Endothelial cell of umbilical vein (primary cell): ENCODE measurements at regions of chr5 and their contacts with region 1.

Region 1: GRCh38 chr5:172370648-172371545 is 83.4 kb downstream of the SH3PXD2B start:
- DNase-seq: peak; percentile 35
- H3K4me3 ChIP-seq: no peak overlapping the region
- H3K27ac ChIP-seq: no peak overlapping the region
- H3K4me1 ChIP-seq: no peaks in the 10 kb centered on the region
- H3K27me3 ChIP-seq: no peaks in the 10 kb centered on the region
- CTCF ChIP-seq: peak; percentile 30 to 46
- POLR2A ChIP-seq: no peak

Region 2: DNA sequence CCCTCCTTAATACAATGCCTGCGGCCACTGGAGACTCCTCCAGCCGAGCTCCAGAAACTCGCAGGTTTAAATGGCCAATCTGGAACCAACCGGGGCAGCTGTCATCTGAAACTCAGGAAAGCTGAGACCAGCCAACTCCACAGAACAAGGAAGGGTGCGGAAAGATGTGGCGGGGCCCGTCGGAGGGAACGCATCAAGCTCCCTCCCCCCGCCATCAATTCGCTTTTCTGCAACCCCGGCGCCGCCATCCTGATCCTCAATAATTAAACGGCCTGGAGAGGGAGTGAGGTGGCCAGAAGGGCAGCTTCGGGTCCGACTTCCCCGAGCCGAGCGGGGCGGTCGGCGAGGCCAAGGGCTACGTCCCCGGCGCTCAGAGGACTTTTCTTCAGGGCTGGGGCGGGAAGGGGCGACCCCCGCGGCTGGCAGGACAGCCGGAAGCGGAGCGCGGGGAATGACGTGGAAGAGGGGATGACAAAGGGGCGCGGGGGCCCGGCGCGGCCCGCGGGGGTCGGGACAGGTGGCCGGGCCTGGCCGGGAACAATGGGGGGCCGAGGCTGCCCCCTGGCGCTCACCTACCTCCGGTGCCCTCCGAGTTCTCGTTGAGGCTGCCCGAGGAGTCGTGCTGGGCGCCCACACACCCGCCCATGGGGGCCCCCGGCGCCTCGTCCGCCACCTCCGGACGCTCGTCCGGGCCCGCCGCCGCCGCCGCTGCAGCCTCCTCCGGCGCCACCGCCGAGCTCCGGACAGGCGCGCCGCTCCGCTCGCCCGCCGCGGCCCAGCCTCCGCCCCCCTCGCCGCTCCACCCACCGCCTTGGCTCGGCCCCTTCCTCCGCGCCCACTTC is 87.7 kb before region 1 on chr5 and contains the start of gene UBTD2:
- CTCF ChIA-PET with region 1: no interaction called
- POLR2A ChIA-PET with region 1: no interaction called
- dilution Hi-C with region 1: no loop called
- intact Hi-C with region 1: no loop called
- DNase-seq: peak; percentile 79
- H3K4me3 ChIP-seq: peak within 1 kb of the TSS; percentile 73 to 93 (median 92)
- H3K27ac ChIP-seq: peak within 1 kb of the TSS; percentile 82
- H3K4me1 ChIP-seq: peaks cover 21% of the 10 kb centered on the region
- H3K27me3 ChIP-seq: no peaks in the 10 kb centered on the region
- CTCF ChIP-seq: peak; percentile 35 to 65
- POLR2A ChIP-seq: peak; percentile 84
- total RNA-seq, gene UBTD2: 21.6 and 22.6 TPM in 2 replicates

Region 3: GRCh38 chr5:172383191-172383802 is 12.4 kb after region 1 on chr5:
- CTCF ChIA-PET with region 1: interaction called, 11 read pairs
- POLR2A ChIA-PET with region 1: no interaction called
- dilution Hi-C with region 1: no loop called
- intact Hi-C with region 1: no loop called
- DNase-seq: no peak
- H3K4me3 ChIP-seq: no peak overlapping the region
- H3K27ac ChIP-seq: no peak overlapping the region
- H3K4me1 ChIP-seq: peaks cover 3% of the 10 kb centered on the region
- H3K27me3 ChIP-seq: no peaks in the 10 kb centered on the region
- CTCF ChIP-seq: no peak
- POLR2A ChIP-seq: no peak